Right lobe of liver (tissue), 6 donors: ENCODE measurements at regions of chr18 and their contacts with region 1.

Region 1: GRCh38 chr18:22207021-22207758 is 37.8 kb downstream of the GATA6 start:
- DNase-seq: no peak
- ATAC-seq: peak in 2 of 4 donors; percentile 22 to 33
- H3K4me3 ChIP-seq: no peak overlapping the region
- H3K27ac ChIP-seq: no peak overlapping the region
- H3K4me1 ChIP-seq: peaks cover 0 to 16% (median 0%) of the 10 kb centered on the region in 4 donors
- H3K27me3 ChIP-seq: no peaks in the 10 kb centered on the region
- CTCF ChIP-seq: no peak
- POLR2A ChIP-seq: no peak

Region 2: GRCh38 chr18:21897811-21898210 is 309.4 kb before region 1 on chr18:
- intact Hi-C with region 1: no loop called
- DNase-seq: peak in 1 of 3 donors; percentile 56
- ATAC-seq: peak; percentile 86 to 92 (median 88)
- H3K4me3 ChIP-seq: no peak overlapping the region
- H3K27ac ChIP-seq: no peak overlapping the region
- H3K4me1 ChIP-seq: peaks cover 0 to 14% (median 5%) of the 10 kb centered on the region in 4 donors
- H3K27me3 ChIP-seq: no peaks in the 10 kb centered on the region
- CTCF ChIP-seq: peak; percentile 55 to 75 (median 67)
- POLR2A ChIP-seq: no peak

Region 3: GRCh38 chr18:22152134-22152533 is 55.1 kb before region 1 on chr18:
- intact Hi-C with region 1: no loop called
- DNase-seq: no peak
- ATAC-seq: no peak
- H3K4me3 ChIP-seq: no peak overlapping the region
- H3K27ac ChIP-seq: no peak overlapping the region
- H3K4me1 ChIP-seq: no peaks in the 10 kb centered on the region
- H3K27me3 ChIP-seq: no peaks in the 10 kb centered on the region
- CTCF ChIP-seq: no peak
- POLR2A ChIP-seq: no peak

Region 4: GRCh38 chr18:22228976-22229375 is 21.8 kb after region 1 on chr18:
- intact Hi-C with region 1: loop called in 1 of 2 experiments (anchors 2 kb)
- DNase-seq: no peak
- ATAC-seq: no peak
- H3K4me3 ChIP-seq: no peak overlapping the region
- H3K27ac ChIP-seq: no peak overlapping the region
- H3K4me1 ChIP-seq: no peaks in the 10 kb centered on the region
- H3K27me3 ChIP-seq: no peaks in the 10 kb centered on the region
- CTCF ChIP-seq: no peak
- POLR2A ChIP-seq: no peak